ENCODE measurements at regions of chrX and their contacts with region 1.

Region 1: DNA sequence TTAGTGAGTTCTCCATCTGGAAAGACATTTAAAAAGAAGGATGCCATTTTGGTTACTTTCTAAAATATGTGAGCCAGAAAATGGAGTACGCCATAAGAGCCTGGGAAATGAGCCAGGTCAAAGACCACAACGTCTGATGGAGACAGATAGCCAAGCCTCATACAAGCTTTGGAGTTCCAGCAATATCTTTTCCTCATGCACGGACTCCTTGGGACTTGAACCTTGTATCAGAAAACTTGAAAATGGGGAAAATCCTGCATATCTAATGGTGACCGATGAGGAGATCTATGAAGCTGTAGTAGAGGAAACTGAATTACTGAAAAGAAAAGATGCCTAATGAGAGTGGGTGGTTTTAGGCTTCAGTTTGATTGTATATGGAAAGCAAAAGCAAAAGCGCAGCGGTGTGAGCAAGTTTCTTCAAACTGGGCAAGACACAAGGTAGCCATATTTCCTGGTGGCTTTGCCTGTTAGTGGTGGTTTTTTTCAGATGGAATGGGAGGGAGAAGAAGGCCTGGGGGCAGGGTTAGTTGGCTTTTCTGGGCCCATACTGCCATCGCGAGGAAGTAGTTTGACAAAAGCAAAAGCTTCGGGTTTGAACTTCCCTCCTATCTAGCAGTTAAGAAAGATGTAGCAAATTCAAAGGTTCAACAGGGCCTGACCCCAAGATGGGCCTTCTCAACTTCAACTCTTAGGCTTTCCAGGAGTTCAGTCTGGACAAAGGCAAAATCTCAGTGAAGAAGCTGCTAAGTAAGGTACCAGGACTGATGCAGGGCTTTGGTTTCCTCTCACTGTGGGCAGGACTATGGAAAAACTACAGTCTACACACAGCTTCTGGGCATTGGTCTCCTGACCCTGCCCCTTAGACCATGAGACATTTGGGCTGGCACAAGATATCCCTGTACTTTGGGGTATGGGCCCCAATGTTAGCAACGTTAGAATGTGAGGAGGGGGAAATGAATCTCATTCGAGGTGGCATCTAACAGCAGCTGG is 210.0 kb upstream of the STK26 start:
- DNase-seq: peak; percentile 70
- ATAC-seq: peak; percentile 89
- H3K4me3 Mint-ChIP-seq: peak overlapping the region; percentile 67
- H3K27ac Mint-ChIP-seq: peak overlapping the region; percentile 86
- H3K4me1 Mint-ChIP-seq: peaks cover 29% of the 10 kb centered on the region
- H3K27me3 Mint-ChIP-seq: no peaks in the 10 kb centered on the region

Region 2: GRCh38 chrX:131830400-131831184 is 17.5 kb after region 1 on chrX:
- CTCF ChIA-PET with region 1: interaction called, 13 read pairs
- POLR2A ChIA-PET with region 1: no interaction called
- intact Hi-C with region 1: no loop called
- DNase-seq: peak; percentile 76
- ATAC-seq: peak; percentile 89
- H3K4me3 Mint-ChIP-seq: peak overlapping the region; percentile 80
- H3K27ac Mint-ChIP-seq: peak overlapping the region; percentile 86
- H3K4me1 Mint-ChIP-seq: peaks cover 25% of the 10 kb centered on the region
- H3K27me3 Mint-ChIP-seq: no peaks in the 10 kb centered on the region

Measured in activated CD4-positive, alpha-beta T cell treated with anti-CD3 and anti-CD28 coated beads for 36 hours (primary cell).